B cell (primary cell): ENCODE measurements at regions of chr7 and their contacts with region 1.

Region 1: GRCh38 chr7:4791738-4792536 is 16.5 kb downstream of the AP5Z1 start:
- DNase-seq: peak; percentile 87
- ATAC-seq: peak; percentile 94
- H3K4me3 ChIP-seq: peak overlapping the region in 4 of 5 experiments; percentile 47 to 63 (median 61)
- H3K4me3 Mint-ChIP-seq: peak overlapping the region; percentile 61
- H3K27ac ChIP-seq: no peak overlapping the region
- H3K27ac Mint-ChIP-seq: no peak overlapping the region
- H3K4me1 ChIP-seq: peaks cover 0 to 9% of the 10 kb centered on the region in 2 donors
- H3K4me1 Mint-ChIP-seq: peaks cover 2% of the 10 kb centered on the region
- H3K27me3 ChIP-seq: no peaks in the 10 kb centered on the region
- H3K27me3 Mint-ChIP-seq: no peaks in the 10 kb centered on the region
- CTCF ChIP-seq: peak; percentile 79

Region 2: GRCh38 chr7:3942816-3943745 is 848.9 kb before region 1 on chr7:
- CTCF ChIA-PET with region 1: no interaction called
- POLR2A ChIA-PET with region 1: no interaction called
- intact Hi-C with region 1: no loop called
- DNase-seq: no peak
- ATAC-seq: no peak
- H3K4me3 ChIP-seq: no peak overlapping the region
- H3K4me3 Mint-ChIP-seq: no peak overlapping the region
- H3K27ac ChIP-seq: no peak overlapping the region
- H3K27ac Mint-ChIP-seq: no peak overlapping the region
- H3K4me1 ChIP-seq: no peaks in the 10 kb centered on the region
- H3K4me1 Mint-ChIP-seq: no peaks in the 10 kb centered on the region
- H3K27me3 ChIP-seq: no peaks in the 10 kb centered on the region
- H3K27me3 Mint-ChIP-seq: peaks cover 26% of the 10 kb centered on the region
- CTCF ChIP-seq: no peak

Region 3: DNA sequence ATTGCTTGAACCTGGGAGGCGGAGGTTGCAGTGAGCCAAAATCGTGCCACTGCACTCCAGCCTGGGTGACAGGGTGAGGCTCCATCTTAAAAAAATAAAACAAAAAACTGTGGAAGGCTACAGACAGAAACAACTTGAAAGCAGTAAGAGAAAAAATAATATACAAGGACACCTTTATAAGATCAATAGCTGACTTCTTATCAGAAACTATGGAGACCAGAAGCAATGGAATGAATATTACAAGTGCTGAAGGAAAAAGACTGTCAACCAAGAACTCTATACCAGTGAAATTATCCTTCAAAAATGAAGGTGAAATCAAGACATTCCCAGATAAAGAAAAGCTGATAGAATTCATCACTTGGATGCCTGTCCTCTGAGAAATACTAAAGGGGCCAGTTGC is 302.7 kb after region 1 on chr7:
- CTCF ChIA-PET with region 1: interaction called, 10 read pairs
- POLR2A ChIA-PET with region 1: no interaction called
- intact Hi-C with region 1: no loop called
- DNase-seq: no peak
- ATAC-seq: no peak
- H3K4me3 ChIP-seq: no peak overlapping the region
- H3K4me3 Mint-ChIP-seq: no peak overlapping the region
- H3K27ac ChIP-seq: no peak overlapping the region
- H3K27ac Mint-ChIP-seq: no peak overlapping the region
- H3K4me1 ChIP-seq: no peaks in the 10 kb centered on the region
- H3K4me1 Mint-ChIP-seq: no peaks in the 10 kb centered on the region
- H3K27me3 ChIP-seq: no peaks in the 10 kb centered on the region
- H3K27me3 Mint-ChIP-seq: peaks cover 3% of the 10 kb centered on the region
- CTCF ChIP-seq: no peak